Activated CD4-positive, alpha-beta memory T cell treated with anti-CD3 and anti-CD28 coated beads for 36 hours (primary cell): ENCODE measurements at regions of chr6 and their contacts with region 1.

Region 1: GRCh38 chr6:44074439-44075136 is 52.7 kb downstream of the MRPL14 start:
- DNase-seq: peak; percentile 81
- H3K4me3 Mint-ChIP-seq: peak overlapping the region; percentile 81
- H3K27ac Mint-ChIP-seq: peak overlapping the region; percentile 24
- H3K4me1 Mint-ChIP-seq: peaks cover 15% of the 10 kb centered on the region
- H3K27me3 Mint-ChIP-seq: peaks cover 14% of the 10 kb centered on the region

Region 2: GRCh38 chr6:43608310-43608763 is 466.3 kb before region 1 on chr6:
- CTCF ChIA-PET with region 1: interaction called, 13 read pairs
- POLR2A ChIA-PET with region 1: no interaction called
- intact Hi-C with region 1: loop called (anchors 10 kb)
- DNase-seq: peak; percentile 69
- H3K4me3 Mint-ChIP-seq: no peak overlapping the region
- H3K27ac Mint-ChIP-seq: no peak overlapping the region
- H3K4me1 Mint-ChIP-seq: peaks cover 3% of the 10 kb centered on the region
- H3K27me3 Mint-ChIP-seq: no peaks in the 10 kb centered on the region

Region 3: DNA sequence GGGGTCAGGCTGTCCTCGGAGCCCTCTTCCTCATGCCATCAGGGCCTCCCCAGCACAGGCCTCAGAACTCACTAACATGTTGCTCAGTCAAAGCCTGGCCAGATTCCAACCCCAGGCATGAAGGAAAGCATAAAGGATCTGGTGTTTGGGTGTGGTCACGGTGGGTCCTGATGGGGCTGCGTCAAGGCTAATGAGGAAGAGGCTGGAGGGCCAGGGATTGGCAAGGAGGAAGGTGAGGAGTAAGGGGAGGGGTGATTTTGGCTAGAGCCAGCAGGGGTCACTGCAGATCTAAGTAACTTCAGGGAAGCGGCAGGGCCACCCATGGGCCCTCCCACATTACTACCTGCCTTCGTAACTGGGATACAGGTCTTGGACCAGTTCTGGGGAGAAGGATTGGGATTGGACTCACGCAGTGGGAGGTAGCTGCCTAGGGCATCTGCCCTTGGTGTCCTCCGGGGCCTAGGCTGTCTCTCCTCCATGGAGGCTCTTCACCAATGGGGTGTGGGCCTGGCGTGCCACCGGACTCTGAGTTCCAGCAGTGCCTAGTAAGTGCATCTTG is 350.8 kb before region 1 on chr6:
- CTCF ChIA-PET with region 1: interaction called, 55 read pairs
- POLR2A ChIA-PET with region 1: no interaction called
- intact Hi-C with region 1: loop called (anchors 1 kb)
- DNase-seq: peak; percentile 86
- H3K4me3 Mint-ChIP-seq: no peak overlapping the region
- H3K27ac Mint-ChIP-seq: no peak overlapping the region
- H3K4me1 Mint-ChIP-seq: peaks cover 24% of the 10 kb centered on the region
- H3K27me3 Mint-ChIP-seq: no peaks in the 10 kb centered on the region

Region 4: GRCh38 chr6:44002593-44003344 is 71.8 kb before region 1 on chr6:
- CTCF ChIA-PET with region 1: interaction called, 3 read pairs
- POLR2A ChIA-PET with region 1: interaction called, 4 read pairs
- intact Hi-C with region 1: loop called (anchors 1 kb)
- DNase-seq: peak; percentile 80
- H3K4me3 Mint-ChIP-seq: peak overlapping the region; percentile 64
- H3K27ac Mint-ChIP-seq: no peak overlapping the region
- H3K4me1 Mint-ChIP-seq: peaks cover 12% of the 10 kb centered on the region
- H3K27me3 Mint-ChIP-seq: peaks cover 38% of the 10 kb centered on the region

Region 5: GRCh38 chr6:44064089-44064947 is 10.3 kb before region 1 on chr6:
- CTCF ChIA-PET with region 1: interaction called, 23 read pairs
- POLR2A ChIA-PET with region 1: no interaction called
- intact Hi-C with region 1: no loop called
- DNase-seq: peak; percentile 59
- H3K4me3 Mint-ChIP-seq: no peak overlapping the region
- H3K27ac Mint-ChIP-seq: no peak overlapping the region
- H3K4me1 Mint-ChIP-seq: peaks cover 5% of the 10 kb centered on the region
- H3K27me3 Mint-ChIP-seq: peaks cover 6% of the 10 kb centered on the region